Psoas muscle (tissue), 8 donors: ENCODE measurements at regions of chr10 and their contacts with region 1.

Region 1: GRCh38 chr10:3472287-3473051 is 299.9 kb upstream of the PITRM1 start:
- DNase-seq: no peak
- ATAC-seq: peak in 1 of 4 donors; percentile 29
- H3K4me3 ChIP-seq: peak overlapping the region; percentile 51
- H3K27ac ChIP-seq: peak overlapping the region; percentile 80
- H3K4me1 ChIP-seq: peaks cover 41% of the 10 kb centered on the region
- H3K27me3 ChIP-seq: no peaks in the 10 kb centered on the region
- CTCF ChIP-seq: no peak

Region 2: DNA sequence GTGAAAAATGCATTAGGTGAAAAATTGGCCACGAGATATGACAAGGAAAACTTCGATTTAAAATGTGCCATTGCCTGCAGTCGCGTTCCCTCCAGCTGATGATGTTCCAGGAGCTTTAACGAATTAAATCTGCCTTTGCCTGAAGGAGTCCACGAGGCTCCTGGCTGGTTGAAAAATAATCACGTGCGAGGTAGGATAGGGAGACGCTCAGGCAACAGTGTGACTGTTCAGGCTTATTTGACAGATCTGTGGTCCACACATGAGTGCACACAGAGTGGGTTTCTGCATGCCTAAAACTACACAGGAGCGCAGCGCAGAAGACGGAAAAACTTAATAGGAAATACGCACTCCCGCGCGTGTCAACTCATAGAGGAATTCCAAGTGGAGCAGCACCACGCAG is 95.8 kb before region 1 on chr10:
- intact Hi-C with region 1: no loop called
- DNase-seq: no peak
- ATAC-seq: no peak
- H3K4me3 ChIP-seq: no peak overlapping the region
- H3K27ac ChIP-seq: no peak overlapping the region
- H3K4me1 ChIP-seq: no peaks in the 10 kb centered on the region
- H3K27me3 ChIP-seq: no peaks in the 10 kb centered on the region
- CTCF ChIP-seq: no peak

Region 3: DNA sequence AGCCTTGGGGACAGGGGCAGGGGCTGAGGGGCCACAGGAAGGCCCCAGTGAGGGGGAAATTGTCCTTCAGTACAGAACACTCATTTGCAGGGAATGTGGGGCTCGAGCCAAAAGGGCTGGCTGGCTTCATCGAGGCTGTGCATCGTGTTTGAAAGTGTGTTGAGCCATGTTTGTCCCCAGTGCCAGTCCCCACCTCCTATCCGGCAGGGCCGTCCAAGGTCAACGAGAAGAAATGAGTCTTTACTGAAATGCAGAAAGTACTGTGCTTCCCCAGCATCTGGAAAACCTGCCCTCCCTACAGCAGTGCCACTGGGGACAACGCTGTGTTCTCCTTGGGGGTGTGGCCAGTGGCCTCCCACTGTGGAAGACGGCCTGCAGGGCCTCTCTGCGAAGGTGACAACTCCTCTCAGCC is 98.4 kb after region 1 on chr10:
- intact Hi-C with region 1: loop called in 1 of 2 experiments (anchors 5 kb)
- DNase-seq: peak; percentile 54 to 71
- ATAC-seq: peak in 3 of 4 donors; percentile 43 to 53 (median 51)
- H3K4me3 ChIP-seq: no peak overlapping the region
- H3K27ac ChIP-seq: peak overlapping the region; percentile 23
- H3K4me1 ChIP-seq: peaks cover 52% of the 10 kb centered on the region
- H3K27me3 ChIP-seq: no peaks in the 10 kb centered on the region
- CTCF ChIP-seq: no peak

Region 4: DNA sequence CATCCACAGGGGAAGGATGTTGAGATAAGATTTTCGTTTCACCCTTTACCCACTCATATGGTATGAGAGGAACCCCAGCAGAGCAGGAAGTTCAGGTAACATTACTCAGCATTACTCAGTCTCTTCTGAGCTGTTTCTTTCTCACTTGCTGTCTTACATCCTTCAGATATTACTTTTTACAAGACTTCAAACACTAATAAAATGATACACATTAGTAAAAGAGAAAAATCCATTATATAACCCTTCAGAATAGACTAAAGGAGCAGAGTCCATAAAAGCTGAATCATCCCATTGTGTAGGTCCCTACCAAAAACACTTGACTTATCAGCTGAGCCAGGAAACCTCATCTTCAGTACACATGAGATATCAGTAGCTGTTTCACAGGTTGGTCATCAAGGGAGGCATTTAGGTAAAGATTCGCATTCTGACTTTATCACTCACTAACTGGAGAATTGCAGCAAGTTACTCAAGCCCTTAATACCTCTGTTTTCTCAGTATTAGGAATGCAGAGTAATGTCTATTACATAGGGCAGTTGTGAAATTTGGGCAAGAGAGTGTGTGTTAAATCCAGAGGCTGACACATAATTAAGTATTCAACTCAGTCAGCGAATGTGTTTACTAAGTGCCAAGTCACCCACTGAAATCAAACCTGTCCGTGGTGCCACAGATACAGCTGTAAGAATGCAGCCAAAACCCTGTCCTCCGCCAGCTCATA is 267.8 kb after region 1 on chr10:
- intact Hi-C with region 1: loop called in 1 of 2 experiments (anchors 10 kb)
- DNase-seq: no peak
- ATAC-seq: peak; percentile 87 to 97 (median 94)
- H3K4me3 ChIP-seq: no peak overlapping the region
- H3K27ac ChIP-seq: peak overlapping the region; percentile 67
- H3K4me1 ChIP-seq: peaks cover 12% of the 10 kb centered on the region
- H3K27me3 ChIP-seq: no peaks in the 10 kb centered on the region
- CTCF ChIP-seq: no peak

Region 5: GRCh38 chr10:3776796-3777571 is 304.5 kb after region 1 on chr10:
- intact Hi-C with region 1: loop called (anchors 2 to 10 kb)
- DNase-seq: peak in 1 of 2 donors; percentile 40
- ATAC-seq: peak; percentile 24 to 52 (median 36)
- H3K4me3 ChIP-seq: peak overlapping the region; percentile 95
- H3K27ac ChIP-seq: peak overlapping the region; percentile 100
- H3K4me1 ChIP-seq: peaks cover 68% of the 10 kb centered on the region
- H3K27me3 ChIP-seq: no peaks in the 10 kb centered on the region
- CTCF ChIP-seq: no peak